Dendritic cell treated with granulocyte-macrophage colony-stimulating factor and Interleukin-4, amounts not matched to agents 40 ng/mL and 50 ng/mL, for 4 days (primary cell): ENCODE measurements at regions of chr5 and their contacts with region 1.

Region 1: GRCh38 chr5:181191529-181192394 is 13.2 kb downstream of the TRIM7 start:
- H3K4me3 Mint-ChIP-seq: peak overlapping the region; percentile 99
- H3K27ac Mint-ChIP-seq: peak overlapping the region; percentile 99
- H3K4me1 Mint-ChIP-seq: peaks cover 58% of the 10 kb centered on the region
- H3K27me3 Mint-ChIP-seq: peaks cover 21% of the 10 kb centered on the region

Region 2: GRCh38 chr5:181223058-181223728 is 31.4 kb after region 1 on chr5 and contains the start of gene TRIM41:
- intact Hi-C with region 1: loop called (anchors 1 kb)
- H3K4me3 Mint-ChIP-seq: peak within 1 kb of the TSS; percentile 82
- H3K27ac Mint-ChIP-seq: peak within 1 kb of the TSS; percentile 93
- H3K4me1 Mint-ChIP-seq: peaks cover 47% of the 10 kb centered on the region
- H3K27me3 Mint-ChIP-seq: peaks cover 3% of the 10 kb centered on the region